Naive thymus-derived CD4-positive, alpha-beta T cell (primary cell): ENCODE measurements at regions of chr16 and their contacts with region 1.

Region 1: DNA sequence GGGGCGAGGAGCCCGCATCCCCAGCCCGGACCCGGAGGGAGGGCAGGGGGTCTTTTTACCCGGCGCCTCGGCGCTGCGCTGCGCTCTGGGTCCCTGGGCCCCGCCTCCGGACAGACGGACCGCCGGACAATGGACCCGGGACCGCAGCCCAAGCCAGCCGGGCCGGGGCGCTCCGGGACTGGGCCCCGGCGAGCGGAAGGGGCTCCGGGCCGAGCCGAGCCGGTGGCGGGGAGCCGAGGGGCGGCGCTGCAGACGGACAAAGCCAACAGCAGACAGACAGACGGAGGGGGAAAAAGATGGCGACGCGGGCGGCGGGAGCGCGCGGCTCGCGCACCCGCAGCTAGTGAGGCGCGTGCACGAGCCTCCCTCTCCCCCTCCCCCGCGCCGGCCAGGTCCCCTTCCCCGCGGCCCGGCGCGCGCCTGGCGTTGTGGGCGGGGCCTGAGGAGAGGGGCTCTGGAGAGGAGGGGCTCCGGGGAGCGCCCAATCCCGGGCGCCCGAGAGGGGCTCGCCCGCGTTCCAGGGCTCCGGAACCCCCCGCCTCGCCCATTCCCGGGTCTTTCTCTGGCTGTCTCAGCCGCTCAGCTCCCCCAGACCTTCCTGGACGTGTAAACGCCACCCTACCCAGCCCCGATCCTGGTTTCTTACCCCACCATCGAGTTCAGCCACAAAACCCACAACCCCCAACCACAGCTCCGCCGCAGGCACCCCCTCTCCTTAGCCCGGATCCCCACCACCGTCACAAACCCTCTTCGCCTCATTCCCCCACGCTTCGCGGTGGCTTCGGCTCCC is at the start of gene ZNF821:
- DNase-seq: peak; percentile 62 to 81 (median 68)
- ATAC-seq: peak; percentile 68
- H3K4me3 ChIP-seq: peak within 1 kb of the TSS; percentile 67
- H3K4me3 Mint-ChIP-seq: peak within 1 kb of the TSS; percentile 84 to 99 (median 96)
- H3K27ac ChIP-seq: peak within 1 kb of the TSS; percentile 84
- H3K27ac Mint-ChIP-seq: peak within 1 kb of the TSS; percentile 88 to 97 (median 95)
- H3K4me1 ChIP-seq: peaks cover 30 to 33% of the 10 kb centered on the region in 2 donors
- H3K4me1 Mint-ChIP-seq: peaks cover 44 to 56% (median 50%) of the 10 kb centered on the region in 7 donors
- H3K27me3 ChIP-seq: no peaks in the 10 kb centered on the region
- H3K27me3 Mint-ChIP-seq: peaks cover 0 to 20% (median 0%) of the 10 kb centered on the region in 5 donors
- total RNA-seq, gene ZNF821: 2.6 to 13.3 (median 7.0) TPM

Region 2: GRCh38 chr16:71723537-71724319 is 160.3 kb before region 1 on chr16:
- CTCF ChIA-PET with region 1: no interaction called
- POLR2A ChIA-PET with region 1: interaction called, 3 read pairs
- intact Hi-C with region 1: loop called (anchors 1 to 2 kb)
- DNase-seq: peak; percentile 81 to 93 (median 88)
- ATAC-seq: peak; percentile 93
- H3K4me3 ChIP-seq: peak overlapping the region; percentile 79
- H3K4me3 Mint-ChIP-seq: peak overlapping the region; percentile 80 to 97 (median 86)
- H3K27ac ChIP-seq: peak overlapping the region; percentile 79
- H3K27ac Mint-ChIP-seq: peak overlapping the region in 8 of 9 donors; percentile 30 to 92 (median 78)
- H3K4me1 ChIP-seq: peaks cover 9% of the 10 kb centered on the region in 2 donors
- H3K4me1 Mint-ChIP-seq: peaks cover 7 to 20% (median 19%) of the 10 kb centered on the region in 7 donors
- H3K27me3 ChIP-seq: no peaks in the 10 kb centered on the region
- H3K27me3 Mint-ChIP-seq: peaks cover 0 to 17% (median 0%) of the 10 kb centered on the region in 5 donors

Region 3: GRCh38 chr16:71794943-71795342 is 89.1 kb before region 1 on chr16:
- CTCF ChIA-PET with region 1: interaction called, 5 read pairs
- POLR2A ChIA-PET with region 1: interaction called, 6 read pairs
- intact Hi-C with region 1: loop called in 1 of 2 experiments (anchors 5 kb)
- DNase-seq: no peak
- ATAC-seq: no peak
- H3K4me3 ChIP-seq: no peak overlapping the region
- H3K4me3 Mint-ChIP-seq: peak overlapping the region in 8 of 10 donors; percentile 3 to 58 (median 38)
- H3K27ac ChIP-seq: no peak overlapping the region
- H3K27ac Mint-ChIP-seq: peak overlapping the region in 7 of 9 donors; percentile 40 to 86 (median 58)
- H3K4me1 ChIP-seq: peaks cover 16 to 29% of the 10 kb centered on the region in 2 donors
- H3K4me1 Mint-ChIP-seq: peaks cover 52 to 83% (median 76%) of the 10 kb centered on the region in 7 donors
- H3K27me3 ChIP-seq: no peaks in the 10 kb centered on the region
- H3K27me3 Mint-ChIP-seq: no peaks in the 10 kb centered on the region

Region 4: GRCh38 chr16:71851746-71852145 is 32.3 kb before region 1 on chr16:
- CTCF ChIA-PET with region 1: interaction called, 8 read pairs
- POLR2A ChIA-PET with region 1: interaction called, 27 read pairs
- intact Hi-C with region 1: loop called in 1 of 2 experiments (anchors 1 kb)
- DNase-seq: no peak
- ATAC-seq: no peak
- H3K4me3 ChIP-seq: no peak overlapping the region
- H3K4me3 Mint-ChIP-seq: no peak overlapping the region
- H3K27ac ChIP-seq: no peak overlapping the region
- H3K27ac Mint-ChIP-seq: peak overlapping the region in 2 of 9 donors; percentile 37 to 41
- H3K4me1 ChIP-seq: peaks cover 26 to 34% of the 10 kb centered on the region in 2 donors
- H3K4me1 Mint-ChIP-seq: peaks cover 35 to 91% (median 78%) of the 10 kb centered on the region in 7 donors
- H3K27me3 ChIP-seq: no peaks in the 10 kb centered on the region
- H3K27me3 Mint-ChIP-seq: no peaks in the 10 kb centered on the region

Region 5: DNA sequence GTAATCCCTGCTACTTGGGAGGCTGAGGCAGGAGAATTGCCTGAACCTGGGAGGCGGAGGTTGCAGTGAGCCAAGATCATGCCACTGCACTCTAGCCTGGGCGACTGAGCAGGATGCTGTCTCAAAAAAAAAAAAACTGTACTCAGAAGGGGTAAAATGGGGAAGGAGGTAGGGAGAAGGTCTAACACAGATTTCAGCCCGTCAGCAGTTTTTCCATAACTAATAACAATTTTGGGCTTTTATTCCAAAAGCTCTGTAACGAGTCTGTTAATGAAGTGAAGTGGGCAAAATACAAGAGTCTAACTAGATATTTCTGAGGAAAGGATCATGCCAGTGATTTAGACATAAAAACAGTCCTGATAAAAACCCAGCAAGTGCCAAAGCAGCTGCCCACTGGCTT is 10.8 kb before region 1 on chr16:
- CTCF ChIA-PET with region 1: interaction called, 9 read pairs
- POLR2A ChIA-PET with region 1: interaction called, 12 read pairs
- intact Hi-C with region 1: loop called (anchors 1 kb)
- DNase-seq: no peak
- ATAC-seq: no peak
- H3K4me3 ChIP-seq: no peak overlapping the region
- H3K4me3 Mint-ChIP-seq: peak overlapping the region; percentile 61 to 83 (median 77)
- H3K27ac ChIP-seq: peak overlapping the region; percentile 25
- H3K27ac Mint-ChIP-seq: peak overlapping the region; percentile 86 to 96 (median 91)
- H3K4me1 ChIP-seq: peaks cover 0 to 6% of the 10 kb centered on the region in 2 donors
- H3K4me1 Mint-ChIP-seq: peaks cover 16 to 37% (median 24%) of the 10 kb centered on the region in 7 donors
- H3K27me3 ChIP-seq: no peaks in the 10 kb centered on the region
- H3K27me3 Mint-ChIP-seq: no peaks in the 10 kb centered on the region

Region 6: GRCh38 chr16:72008424-72009216 is 124.6 kb after region 1 on chr16 and contains the start of gene DHODH:
- CTCF ChIA-PET with region 1: no interaction called
- POLR2A ChIA-PET with region 1: no interaction called
- intact Hi-C with region 1: loop called in 1 of 2 experiments (anchors 5 kb)
- DNase-seq: peak; percentile 92 to 99 (median 97)
- ATAC-seq: peak; percentile 100
- H3K4me3 ChIP-seq: peak within 1 kb of the TSS; percentile 100
- H3K4me3 Mint-ChIP-seq: peak within 1 kb of the TSS; percentile 92 to 100 (median 98)
- H3K27ac ChIP-seq: peak within 1 kb of the TSS; percentile 62
- H3K27ac Mint-ChIP-seq: peak within 1 kb of the TSS; percentile 75 to 96 (median 89)
- H3K4me1 ChIP-seq: no peaks in the 10 kb centered on the region
- H3K4me1 Mint-ChIP-seq: peaks cover 9 to 22% (median 16%) of the 10 kb centered on the region in 7 donors
- H3K27me3 ChIP-seq: no peaks in the 10 kb centered on the region
- H3K27me3 Mint-ChIP-seq: peaks cover 0 to 3% (median 0%) of the 10 kb centered on the region in 5 donors
- total RNA-seq, gene DHODH: 4.9 to 15.6 (median 14.0) TPM